HEK293 (cell line): ENCODE measurements at regions of chr19 and their contacts with region 1.

Region 1: GRCh38 chr19:2475702-2476450 is at the start of gene GADD45B:
- H3K4me3 ChIP-seq: peak within 1 kb of the TSS; percentile 95
- H3K27ac ChIP-seq: peak within 1 kb of the TSS; percentile 68
- H3K4me1 ChIP-seq: peaks cover 15% of the 10 kb centered on the region
- CTCF ChIP-seq: no peak

Region 2: GRCh38 chr19:2461751-2462634 is 13.9 kb before region 1 on chr19:
- CTCF ChIA-PET with region 1: interaction called, 13 read pairs
- POLR2A ChIA-PET with region 1: interaction called, 83 read pairs
- H3K4me3 ChIP-seq: peak overlapping the region; percentile 29
- H3K27ac ChIP-seq: peak overlapping the region; percentile 0; the same call in 1 of the 2 replicates
- H3K4me1 ChIP-seq: no peaks in the 10 kb centered on the region
- CTCF ChIP-seq: no peak

Region 3: DNA sequence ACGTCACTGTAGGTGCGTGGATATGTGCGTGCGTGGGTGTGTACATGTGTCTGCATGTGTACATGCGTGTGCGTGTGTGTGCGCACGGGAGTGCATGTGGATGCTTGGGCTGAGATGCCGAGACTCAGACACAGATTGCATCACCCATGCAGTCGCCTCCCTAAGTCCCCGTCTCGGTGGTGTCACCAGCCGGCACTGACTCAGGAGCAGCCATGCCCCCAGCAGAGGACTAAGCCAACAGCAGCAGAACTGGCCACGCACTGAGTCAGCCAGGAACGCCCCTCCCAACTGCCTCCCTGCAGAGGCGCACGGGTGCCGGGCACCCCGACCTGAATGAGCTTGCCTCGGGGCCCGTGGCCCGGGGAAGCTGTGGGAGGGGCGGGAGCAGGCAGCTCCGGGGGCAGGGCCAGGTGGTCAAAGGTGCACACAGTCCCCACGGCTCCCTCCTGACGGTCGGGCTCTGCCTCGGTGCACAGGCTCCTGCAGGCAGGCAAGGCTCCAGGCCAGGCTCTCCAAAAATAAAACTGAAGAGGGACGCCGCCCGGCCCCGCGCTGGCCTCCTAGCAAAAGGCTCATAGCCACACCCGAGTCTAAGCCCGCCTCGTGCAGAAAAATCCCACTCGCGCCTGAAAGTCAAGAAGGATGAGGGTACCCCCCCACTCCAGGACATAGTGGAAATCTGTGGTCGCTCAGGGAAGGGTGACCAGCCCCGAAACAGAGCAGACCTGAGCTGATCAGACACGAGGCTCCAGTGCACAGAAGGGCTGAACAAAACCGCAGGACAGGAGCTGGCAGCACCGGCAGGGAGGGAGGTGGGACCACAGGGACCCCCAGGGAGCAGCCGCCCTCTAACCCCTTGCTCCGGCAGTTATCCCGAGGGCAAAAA is 49.2 kb after region 1 on chr19:
- CTCF ChIA-PET with region 1: interaction called, 3 read pairs
- POLR2A ChIA-PET with region 1: interaction called, 62 read pairs
- H3K4me3 ChIP-seq: peak overlapping the region; percentile 23
- H3K27ac ChIP-seq: no peak overlapping the region; the same call in 1 of the 2 replicates
- H3K4me1 ChIP-seq: 0 out of 2 replicates have a peak, but pooled peaks cover 4% of the 10 kb centered on the region
- CTCF ChIP-seq: no peak; the same call in 1 of the 2 replicates

Region 4: GRCh38 chr19:2578901-2579677 is 103.2 kb after region 1 on chr19:
- CTCF ChIA-PET with region 1: interaction called, 27 read pairs
- POLR2A ChIA-PET with region 1: interaction called, 308 read pairs
- H3K4me3 ChIP-seq: peak overlapping the region; percentile 51
- H3K27ac ChIP-seq: peak overlapping the region; percentile 44; the same call in 1 of the 2 replicates
- H3K4me1 ChIP-seq: no peaks in the 10 kb centered on the region
- CTCF ChIP-seq: peak; percentile 96

Region 5: DNA sequence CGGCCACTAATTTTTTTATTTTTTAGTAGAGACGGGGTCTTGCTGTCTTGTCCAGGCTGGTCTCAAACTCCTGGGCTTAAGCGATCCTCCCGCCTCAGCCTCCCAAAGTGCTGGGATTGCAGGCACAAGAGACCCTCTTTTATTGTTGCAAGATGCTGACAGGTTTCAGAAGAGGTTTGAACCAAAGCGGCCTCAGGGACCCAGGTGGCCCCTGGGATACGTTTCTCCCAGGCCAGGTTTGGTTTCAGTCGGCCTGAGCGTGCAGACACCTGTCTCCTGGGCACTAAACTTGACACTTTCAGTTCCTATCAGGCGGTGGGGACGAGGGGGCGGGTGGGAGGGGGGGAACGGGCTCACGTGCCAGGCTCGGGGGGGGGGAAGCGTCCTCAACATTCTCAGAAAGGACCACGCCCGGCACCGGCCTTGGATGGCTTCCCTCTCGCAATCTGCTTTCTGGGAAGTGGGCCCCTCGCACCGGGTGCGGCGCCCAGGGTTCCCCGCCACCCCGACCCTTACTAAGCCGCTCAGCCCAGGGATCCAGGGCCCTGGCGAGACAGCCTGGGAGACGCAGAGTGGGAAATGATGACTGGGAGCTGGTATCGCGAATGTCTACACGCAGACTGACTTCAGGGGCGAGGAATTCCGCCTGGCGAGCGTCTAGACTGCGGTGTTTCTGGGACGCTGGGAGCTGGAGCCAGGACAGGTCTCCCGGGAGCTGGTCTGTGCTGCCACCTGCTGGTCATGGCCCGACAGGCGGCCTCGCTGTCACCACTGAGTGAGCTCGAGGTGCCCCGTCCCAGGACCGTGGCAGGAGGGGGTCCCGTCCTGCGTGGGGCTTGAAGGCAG is 135.0 kb after region 1 on chr19:
- CTCF ChIA-PET with region 1: interaction called, 43 read pairs
- POLR2A ChIA-PET with region 1: interaction called, 251 read pairs
- H3K4me3 ChIP-seq: peak overlapping the region; percentile 35
- H3K27ac ChIP-seq: no peak overlapping the region
- H3K4me1 ChIP-seq: no peaks in the 10 kb centered on the region
- CTCF ChIP-seq: peak; percentile 95